ENCODE measurements at regions of chr7 and their contacts with region 1.

Region 1: GRCh38 chr7:31122649-31123058 is 70.5 kb downstream of the ADCYAP1R1 start:
- DNase-seq: peak; percentile 70

Region 2: GRCh38 chr7:30977896-30978564 is 144.6 kb before region 1 on chr7:
- CTCF ChIA-PET with region 1: interaction called, 137 read pairs
- POLR2A ChIA-PET with region 1: interaction called, 7 read pairs
- DNase-seq: peak; percentile 34

Region 3: DNA sequence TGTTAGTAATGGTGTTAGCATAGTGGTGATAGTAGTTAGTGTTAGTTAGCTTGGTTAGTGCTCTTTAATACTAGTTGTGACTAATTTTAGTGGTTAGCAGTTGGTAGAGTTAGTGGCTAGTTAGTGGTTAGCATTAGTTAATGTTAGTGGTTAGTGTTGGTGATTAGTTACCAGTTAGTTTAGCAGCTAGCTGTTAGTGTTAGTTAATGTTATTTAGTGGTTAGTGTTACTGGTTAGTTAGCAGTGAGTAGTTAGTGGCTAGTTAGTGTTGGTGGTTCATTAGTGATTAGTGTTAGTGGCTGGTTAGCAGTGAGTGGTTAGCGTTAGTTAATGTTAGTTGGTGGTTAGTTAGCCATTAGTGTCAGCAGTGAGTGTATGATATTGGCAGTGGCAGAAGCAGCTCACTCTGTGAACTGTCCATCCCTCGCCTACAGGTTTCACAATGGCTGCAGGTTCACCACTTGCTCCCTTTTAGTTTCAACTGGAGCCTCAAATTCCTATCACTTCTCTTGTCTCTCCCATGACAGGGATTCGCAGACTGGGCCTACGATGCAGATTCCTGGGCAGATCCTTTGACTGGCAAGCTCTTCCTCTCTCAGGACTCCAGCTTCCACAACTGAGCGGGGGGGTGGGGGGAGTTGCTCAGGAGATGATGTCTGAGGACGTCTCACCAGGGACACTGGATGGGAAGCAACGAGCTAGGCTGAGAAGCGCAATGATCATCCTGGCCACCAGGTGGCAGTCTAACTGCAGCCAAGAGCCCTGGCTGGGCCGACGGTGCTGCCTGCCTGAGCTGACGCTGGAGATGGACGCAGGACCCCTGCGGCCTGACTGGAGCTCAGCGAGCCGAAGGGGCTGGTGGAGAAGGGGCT is 139.4 kb before region 1 on chr7:
- CTCF ChIA-PET with region 1: interaction called, 137 read pairs
- POLR2A ChIA-PET with region 1: interaction called, 7 read pairs
- DNase-seq: peak; percentile 91

Region 4: GRCh38 chr7:31104361-31105255 is 18.0 kb before region 1 on chr7:
- CTCF ChIA-PET with region 1: interaction called, 10 read pairs
- POLR2A ChIA-PET with region 1: no interaction called
- DNase-seq: no peak

Region 5: DNA sequence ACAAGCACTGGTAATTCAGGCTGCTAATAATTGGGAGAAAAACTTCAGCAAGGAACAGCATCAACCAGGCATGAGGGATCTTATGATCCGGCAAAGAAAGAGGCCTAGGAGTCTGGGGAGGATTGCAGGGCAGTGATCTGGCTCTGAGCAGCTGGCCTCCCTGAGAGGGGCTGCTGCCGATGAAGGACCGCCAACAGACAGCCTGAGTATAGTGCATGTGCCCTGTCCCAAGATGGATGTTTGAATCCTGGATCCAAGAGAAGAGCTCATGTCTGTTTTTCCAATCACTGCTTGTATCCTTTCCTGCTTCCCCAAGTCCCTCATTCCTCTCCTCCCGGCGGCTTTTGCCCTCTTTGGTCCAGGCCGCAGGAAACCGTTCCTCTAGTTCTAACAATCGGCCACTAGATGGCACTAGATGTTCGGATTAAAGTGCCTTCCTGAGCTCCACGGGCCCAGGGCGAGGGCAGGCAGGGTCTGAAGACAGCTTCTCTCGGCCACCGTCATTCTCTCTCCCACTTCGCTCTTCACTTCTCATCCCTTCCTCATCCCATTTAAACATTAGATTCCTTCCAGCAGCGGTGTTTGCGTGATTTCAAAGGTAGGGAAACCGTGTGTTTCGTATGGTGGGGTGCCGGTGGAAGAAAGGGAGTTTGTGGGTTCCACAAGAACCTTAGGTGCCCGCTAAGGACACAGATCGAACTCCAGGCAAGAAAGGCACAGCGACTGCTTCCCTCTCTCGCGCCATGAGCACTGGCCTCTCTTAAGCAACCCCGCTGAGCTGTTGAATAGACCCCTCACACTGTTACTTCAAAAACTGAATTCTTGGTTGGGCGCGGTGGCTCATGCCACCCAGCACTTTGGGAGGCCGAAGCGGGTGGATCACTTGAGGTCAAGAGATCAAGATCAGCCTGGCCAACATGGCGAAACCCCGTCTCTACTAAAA is 11.9 kb after region 1 on chr7:
- CTCF ChIA-PET with region 1: interaction called, 15 read pairs
- POLR2A ChIA-PET with region 1: no interaction called
- DNase-seq: peak; percentile 83

Region 6: DNA sequence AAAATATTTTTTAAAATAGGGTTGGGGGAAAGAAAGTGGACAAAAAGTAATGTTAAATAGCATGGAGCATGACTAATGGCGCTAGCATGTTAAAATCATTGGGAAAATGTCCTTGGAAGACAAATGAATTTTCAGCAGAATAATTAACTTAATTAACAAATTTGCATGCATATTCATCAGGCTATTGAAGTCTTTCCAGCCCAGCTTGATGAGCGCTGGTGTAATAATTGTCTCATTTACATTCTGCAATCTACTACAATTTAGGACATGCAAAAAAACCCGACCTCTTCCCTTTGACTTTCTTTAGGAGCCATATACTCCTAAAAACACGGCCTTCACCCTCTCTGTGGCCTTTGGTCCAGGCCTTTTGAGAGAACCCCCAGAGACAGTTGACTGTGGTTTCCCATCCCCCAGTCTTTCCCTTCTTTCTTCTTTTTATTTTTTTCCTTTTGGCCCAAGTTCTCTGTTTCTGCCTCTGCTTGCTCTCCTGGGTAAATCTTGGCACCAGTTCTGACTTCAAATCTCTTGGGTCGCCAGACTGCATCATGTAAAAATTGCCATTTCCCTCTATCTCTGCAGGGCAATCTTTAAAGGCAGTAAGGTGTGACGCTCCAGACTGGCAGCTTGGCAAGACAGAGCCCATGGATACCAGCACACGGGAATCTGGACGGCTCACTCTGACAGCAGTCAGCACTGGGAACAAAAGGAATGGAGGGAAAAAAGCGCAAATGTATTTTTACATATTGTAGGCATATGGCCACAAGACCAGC is 112.4 kb after region 1 on chr7:
- CTCF ChIA-PET with region 1: no interaction called
- POLR2A ChIA-PET with region 1: no interaction called
- DNase-seq: no peak

Measured in HEK293T (cell line).